Keratinocyte (primary cell): ENCODE measurements at regions of chr2 and their contacts with region 1.

Region 1: GRCh38 chr2:197804049-197804757 is at the start of gene PLCL1:
- DNase-seq: peak; percentile 54
- H3K4me3 ChIP-seq: peak within 1 kb of the TSS; percentile 40 to 68 (median 41)
- H3K27ac ChIP-seq: no peak within 1 kb of the TSS
- H3K4me1 ChIP-seq: peaks cover 3% of the 10 kb centered on the region
- H3K27me3 ChIP-seq: peaks cover 24% of the 10 kb centered on the region
- CTCF ChIP-seq: no peak
- polyA plus RNA-seq, gene PLCL1: 0.01 TPM in 2 of 3 replicates, not detected in the other

Region 2: GRCh38 chr2:198100346-198100745 is 296.1 kb after region 1 on chr2:
- dilution Hi-C with region 1: loop called (anchors 25 kb)
- DNase-seq: no peak
- H3K4me3 ChIP-seq: no peak overlapping the region
- H3K27ac ChIP-seq: no peak overlapping the region
- H3K4me1 ChIP-seq: no peaks in the 10 kb centered on the region
- H3K27me3 ChIP-seq: no peaks in the 10 kb centered on the region
- CTCF ChIP-seq: no peak